ENCODE measurements at regions of chr1 and their contacts with region 1.

Region 1: DNA sequence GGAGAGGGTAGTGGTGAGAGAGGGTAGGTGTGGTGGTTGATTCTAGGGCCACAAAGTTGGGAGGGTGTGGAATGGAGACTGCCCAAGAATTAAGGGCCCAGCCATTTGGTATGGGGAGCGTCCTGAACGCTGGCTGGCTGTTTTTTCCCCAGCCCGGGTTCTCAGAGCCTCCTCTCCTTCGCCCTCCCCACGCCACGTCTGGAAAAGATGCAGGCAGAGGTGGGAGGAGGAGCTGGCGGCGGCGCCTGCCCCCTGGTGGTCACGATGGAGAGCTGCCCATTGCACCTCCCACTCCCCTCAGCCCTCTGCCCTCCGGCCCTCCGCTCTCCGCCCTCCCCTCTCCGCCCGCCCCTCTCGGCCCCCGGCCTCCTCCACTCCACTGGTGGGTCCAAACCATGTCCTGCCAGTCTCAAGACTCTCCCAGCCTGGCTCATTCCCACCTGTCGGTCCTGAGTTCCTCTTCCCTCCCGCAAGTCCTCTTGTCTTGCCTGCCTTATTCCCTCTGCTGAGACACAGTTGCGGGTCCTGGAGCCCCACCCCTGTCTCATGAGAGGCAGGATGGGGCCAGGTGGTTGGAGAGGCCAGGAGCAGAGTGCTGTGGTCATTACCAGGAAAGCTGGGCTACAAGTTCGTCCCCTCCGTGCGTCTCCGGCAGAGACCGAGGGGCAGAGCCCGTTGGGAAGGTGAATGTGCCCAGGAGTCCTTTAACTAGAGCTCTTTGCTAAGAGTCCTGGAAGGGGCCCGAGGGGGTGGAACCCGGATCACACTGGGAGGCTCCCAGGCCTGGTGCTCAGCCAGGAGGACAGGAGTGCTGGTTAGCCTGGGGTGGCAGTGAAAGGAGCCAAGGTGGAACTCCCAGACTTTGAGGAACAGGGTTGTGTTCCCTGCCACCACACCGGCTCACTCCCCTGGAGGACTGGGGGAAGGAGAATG is 22.6 kb downstream of the ETNK2 start:
- DNase-seq: peak; percentile 90
- ATAC-seq: peak; percentile 90
- H3K4me3 ChIP-seq: peak overlapping the region; percentile 25
- H3K27ac ChIP-seq: peak overlapping the region; percentile 6
- H3K4me1 ChIP-seq: peaks cover 13% of the 10 kb centered on the region
- H3K27me3 ChIP-seq: no peaks in the 10 kb centered on the region
- CTCF ChIP-seq: peak; percentile 91

Region 2: GRCh38 chr1:203861379-203862184 is 267.6 kb before region 1 on chr1 and contains the start of gene SNRPE:
- intact Hi-C with region 1: loop called (anchors 5 kb)
- DNase-seq: peak; percentile 97
- ATAC-seq: peak; percentile 100
- H3K4me3 ChIP-seq: peak within 1 kb of the TSS; percentile 100
- H3K27ac ChIP-seq: peak within 1 kb of the TSS; percentile 74
- H3K4me1 ChIP-seq: peaks cover 13% of the 10 kb centered on the region
- H3K27me3 ChIP-seq: no peaks in the 10 kb centered on the region
- CTCF ChIP-seq: peak; percentile 92
- total RNA-seq, gene SNRPE: 58.0 TPM

Region 3: GRCh38 chr1:203871107-203871875 is 257.9 kb before region 1 on chr1:
- intact Hi-C with region 1: loop called (anchors 2 kb)
- DNase-seq: no peak
- ATAC-seq: peak; percentile 76
- H3K4me3 ChIP-seq: no peak overlapping the region
- H3K27ac ChIP-seq: no peak overlapping the region
- H3K4me1 ChIP-seq: no peaks in the 10 kb centered on the region
- H3K27me3 ChIP-seq: no peaks in the 10 kb centered on the region
- CTCF ChIP-seq: peak; percentile 67

Region 4: GRCh38 chr1:204074274-204075138 is 54.7 kb before region 1 on chr1:
- intact Hi-C with region 1: loop called (anchors 5 kb)
- DNase-seq: peak; percentile 81
- ATAC-seq: peak; percentile 44
- H3K4me3 ChIP-seq: peak overlapping the region; percentile 68
- H3K27ac ChIP-seq: peak overlapping the region; percentile 88
- H3K4me1 ChIP-seq: peaks cover 47% of the 10 kb centered on the region
- H3K27me3 ChIP-seq: no peaks in the 10 kb centered on the region
- CTCF ChIP-seq: no peak